ENCODE measurements at regions of chrX and their contacts with region 1.

Region 1: DNA sequence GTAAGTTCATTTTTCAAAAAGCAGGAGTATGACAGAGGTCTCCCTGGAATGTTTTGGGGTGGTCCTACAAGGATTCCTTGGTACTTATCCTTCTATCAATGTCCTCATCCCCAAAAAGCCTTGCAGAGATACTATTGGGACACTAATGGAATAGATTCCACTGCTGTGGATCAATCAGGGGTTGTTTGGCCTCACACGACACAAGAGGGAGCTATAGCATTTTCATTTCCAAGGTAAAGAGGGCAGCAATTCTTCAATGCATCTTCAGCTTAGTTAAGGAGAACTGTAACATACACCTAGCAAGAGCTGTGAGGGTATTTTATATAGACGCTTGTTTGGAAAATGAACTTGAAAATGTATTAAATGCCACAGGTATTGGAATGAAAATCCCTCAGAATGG is 50.9 kb downstream of the USP26 start:
- DNase-seq: peak; percentile 10
- ATAC-seq: peak; percentile 58
- H3K4me3 ChIP-seq: no peak overlapping the region
- H3K27ac ChIP-seq: no peak overlapping the region
- H3K4me1 ChIP-seq: no peaks in the 10 kb centered on the region
- H3K27me3 ChIP-seq: no peaks in the 10 kb centered on the region
- CTCF ChIP-seq: peak; percentile 26 to 53 (median 43); a peak in 4 of 6 replicates
- POLR2A ChIP-seq: no peak
- RAD21 ChIP-seq: peak; percentile 64

Region 2: GRCh38 chrX:132999150-132999549 is 46.8 kb before region 1 on chrX:
- CTCF ChIA-PET with region 1: no interaction called
- POLR2A ChIA-PET with region 1: no interaction called
- RAD21 ChIA-PET with region 1: no interaction called
- intact Hi-C with region 1: no loop called
- DNase-seq: no peak
- ATAC-seq: no peak
- H3K4me3 ChIP-seq: no peak overlapping the region
- H3K27ac ChIP-seq: no peak overlapping the region
- H3K4me1 ChIP-seq: no peaks in the 10 kb centered on the region
- H3K27me3 ChIP-seq: no peaks in the 10 kb centered on the region
- CTCF ChIP-seq: no peak
- POLR2A ChIP-seq: no peak
- RAD21 ChIP-seq: no peak

Region 3: DNA sequence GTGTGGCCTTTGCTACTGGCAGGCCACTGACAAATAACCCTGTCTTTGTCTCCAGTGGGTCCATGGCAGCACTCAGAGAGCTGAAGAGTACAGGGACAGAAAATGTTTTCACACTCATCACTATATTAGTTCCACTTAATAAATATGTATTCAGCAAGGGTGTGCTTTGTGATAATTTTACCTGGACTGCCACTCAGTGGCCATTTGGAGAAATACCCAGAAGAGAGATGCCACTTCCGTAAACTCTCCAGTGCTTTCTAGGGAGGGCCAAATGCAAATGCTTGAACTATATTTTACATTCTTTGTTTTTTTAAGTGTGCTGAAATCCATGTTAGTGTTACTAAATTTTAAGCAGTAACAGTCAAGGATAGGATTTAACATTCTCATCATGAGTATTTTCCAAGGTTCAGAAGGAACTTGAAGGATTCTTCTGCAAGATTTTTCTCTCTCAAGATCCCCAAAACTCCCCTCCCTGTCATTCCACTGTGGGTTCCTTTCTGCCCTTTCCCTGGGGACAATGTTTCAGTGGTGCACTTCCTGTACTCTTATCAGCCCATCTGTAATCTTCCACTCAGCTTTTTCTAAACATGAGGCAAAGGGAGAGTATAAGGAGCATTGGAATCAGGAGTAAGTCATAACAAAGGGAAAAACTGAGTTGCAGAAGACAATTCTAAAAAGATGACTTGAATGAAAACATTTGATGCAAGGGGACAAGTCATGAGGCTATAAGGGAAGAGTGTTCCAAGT is 126.1 kb after region 1 on chrX:
- CTCF ChIA-PET with region 1: interaction called, 6 read pairs
- POLR2A ChIA-PET with region 1: no interaction called
- RAD21 ChIA-PET with region 1: no interaction called
- intact Hi-C with region 1: loop called (anchors 1 kb)
- DNase-seq: peak; percentile 22
- ATAC-seq: peak; percentile 90
- H3K4me3 ChIP-seq: no peak overlapping the region
- H3K27ac ChIP-seq: no peak overlapping the region
- H3K4me1 ChIP-seq: no peaks in the 10 kb centered on the region
- H3K27me3 ChIP-seq: no peaks in the 10 kb centered on the region
- CTCF ChIP-seq: peak; percentile 38 to 53 (median 51); a peak in 5 of 6 replicates
- POLR2A ChIP-seq: no peak
- RAD21 ChIP-seq: peak; percentile 70

Region 4: DNA sequence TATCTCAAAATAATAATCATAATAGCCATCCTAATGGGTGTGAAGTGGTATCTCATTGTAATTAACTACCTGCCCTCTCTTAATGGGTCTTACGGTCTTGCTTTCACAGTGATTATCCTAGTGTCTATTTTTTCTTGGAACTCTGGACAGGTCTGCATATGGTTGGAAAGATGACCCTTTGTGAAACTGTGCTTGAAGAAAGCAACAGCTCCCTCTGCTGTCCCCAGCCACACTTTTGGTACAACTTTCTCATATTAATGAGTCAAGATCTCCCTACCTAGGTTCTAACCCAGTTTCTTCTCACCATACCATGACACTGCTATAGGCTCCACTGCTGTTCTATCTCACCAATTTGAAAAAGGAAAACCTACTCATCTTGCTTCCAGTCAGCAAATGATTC is 169.8 kb after region 1 on chrX:
- CTCF ChIA-PET with region 1: no interaction called
- POLR2A ChIA-PET with region 1: no interaction called
- RAD21 ChIA-PET with region 1: no interaction called
- intact Hi-C with region 1: loop called (anchors 5 kb)
- DNase-seq: no peak
- ATAC-seq: peak; percentile 68; the same call in 1 of the 2 replicates
- H3K4me3 ChIP-seq: no peak overlapping the region
- H3K27ac ChIP-seq: no peak overlapping the region
- H3K4me1 ChIP-seq: no peaks in the 10 kb centered on the region
- H3K27me3 ChIP-seq: no peaks in the 10 kb centered on the region
- CTCF ChIP-seq: peak; percentile 27 to 45 (median 42); a peak in 5 of 6 replicates
- POLR2A ChIP-seq: no peak
- RAD21 ChIP-seq: peak; percentile 63

Region 5: DNA sequence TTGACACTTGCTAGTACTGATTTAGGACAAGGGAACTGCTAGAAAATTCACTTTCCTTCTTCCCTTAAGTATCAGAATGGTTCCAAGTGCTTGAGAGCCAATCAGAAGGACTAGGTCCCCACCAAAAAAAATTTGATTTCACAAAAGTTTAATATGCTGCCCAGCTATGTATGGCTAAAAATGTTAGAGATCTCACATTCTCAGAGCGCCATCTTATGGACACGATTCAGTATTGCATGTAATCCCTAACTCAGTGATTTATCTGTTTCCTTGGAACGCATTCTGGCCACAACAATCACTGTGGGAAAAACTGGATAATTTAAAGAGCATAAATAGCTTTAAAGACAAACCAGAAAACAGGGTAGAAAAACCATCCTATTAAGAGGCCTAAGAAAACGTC is 624.4 kb after region 1 on chrX:
- CTCF ChIA-PET with region 1: interaction called, 3 read pairs
- POLR2A ChIA-PET with region 1: no interaction called
- RAD21 ChIA-PET with region 1: no interaction called
- intact Hi-C with region 1: loop called (anchors 10 kb)
- DNase-seq: peak; percentile 12
- ATAC-seq: peak; percentile 54; the same call in 1 of the 2 replicates
- H3K4me3 ChIP-seq: no peak overlapping the region
- H3K27ac ChIP-seq: no peak overlapping the region
- H3K4me1 ChIP-seq: no peaks in the 10 kb centered on the region
- H3K27me3 ChIP-seq: no peaks in the 10 kb centered on the region
- CTCF ChIP-seq: peak; percentile 37 to 62 (median 59)
- POLR2A ChIP-seq: no peak
- RAD21 ChIP-seq: peak; percentile 82